ENCODE measurements at regions of chr12 and their contacts with region 1.

Region 1: GRCh38 chr12:6423267-6424007 is 21.3 kb upstream of the CD27 start:
- DNase-seq: peak; percentile 86
- ATAC-seq: peak; percentile 62
- H3K4me3 Mint-ChIP-seq: peak overlapping the region; percentile 39
- H3K27ac Mint-ChIP-seq: peak overlapping the region; percentile 87
- H3K4me1 Mint-ChIP-seq: peaks cover 47% of the 10 kb centered on the region
- H3K27me3 Mint-ChIP-seq: no peaks in the 10 kb centered on the region

Region 2: DNA sequence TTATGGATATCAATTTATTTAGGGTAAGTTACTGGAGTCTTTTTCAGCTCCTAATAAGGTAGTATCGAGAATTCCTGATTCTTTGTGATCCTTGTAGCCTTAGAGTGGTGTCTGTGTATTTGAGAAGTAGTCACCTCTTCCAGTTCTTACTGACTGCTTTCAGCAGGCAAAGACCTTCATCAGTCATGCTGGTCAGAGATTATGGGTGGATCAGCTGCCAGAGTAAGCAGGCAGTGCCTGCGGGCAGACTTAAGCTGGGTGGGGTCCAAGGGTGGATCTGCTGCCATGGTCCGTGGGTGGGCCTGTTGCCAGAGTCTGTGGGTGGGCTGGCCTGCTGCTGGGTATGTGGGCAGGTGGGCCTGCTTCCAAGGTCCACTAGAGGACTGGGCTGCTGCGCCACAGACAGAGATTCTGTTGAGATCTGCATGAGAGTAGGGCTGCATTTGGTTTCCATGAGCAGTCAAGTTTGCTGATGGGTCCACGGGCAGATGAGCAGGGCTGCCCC is 667.0 kb before region 1 on chr12:
- CTCF ChIA-PET with region 1: no interaction called
- POLR2A ChIA-PET with region 1: no interaction called
- intact Hi-C with region 1: no loop called
- DNase-seq: no peak
- ATAC-seq: no peak
- H3K4me3 Mint-ChIP-seq: no peak overlapping the region
- H3K27ac Mint-ChIP-seq: no peak overlapping the region
- H3K4me1 Mint-ChIP-seq: no peaks in the 10 kb centered on the region
- H3K27me3 Mint-ChIP-seq: peaks cover 5% of the 10 kb centered on the region

Region 3: GRCh38 chr12:6323340-6323994 is 100.0 kb before region 1 on chr12:
- CTCF ChIA-PET with region 1: interaction called, 6 read pairs
- POLR2A ChIA-PET with region 1: no interaction called
- intact Hi-C with region 1: loop called (anchors 5 kb)
- DNase-seq: peak; percentile 58
- ATAC-seq: peak; percentile 81
- H3K4me3 Mint-ChIP-seq: peak overlapping the region; percentile 24
- H3K27ac Mint-ChIP-seq: peak overlapping the region; percentile 89
- H3K4me1 Mint-ChIP-seq: peaks cover 32% of the 10 kb centered on the region
- H3K27me3 Mint-ChIP-seq: no peaks in the 10 kb centered on the region

Region 4: GRCh38 chr12:6451348-6452244 is 28.2 kb after region 1 on chr12 and contains the start of gene TAPBPL:
- CTCF ChIA-PET with region 1: interaction called, 30 read pairs
- POLR2A ChIA-PET with region 1: interaction called, 8 read pairs
- intact Hi-C with region 1: loop called (anchors 1 to 2 kb)
- DNase-seq: peak; percentile 91
- ATAC-seq: peak; percentile 84
- H3K4me3 Mint-ChIP-seq: peak within 1 kb of the TSS; percentile 100
- H3K27ac Mint-ChIP-seq: peak within 1 kb of the TSS; percentile 99
- H3K4me1 Mint-ChIP-seq: peaks cover 67% of the 10 kb centered on the region
- H3K27me3 Mint-ChIP-seq: no peaks in the 10 kb centered on the region
- total RNA-seq, gene TAPBPL: 27.4 to 40.8 TPM

Region 5: DNA sequence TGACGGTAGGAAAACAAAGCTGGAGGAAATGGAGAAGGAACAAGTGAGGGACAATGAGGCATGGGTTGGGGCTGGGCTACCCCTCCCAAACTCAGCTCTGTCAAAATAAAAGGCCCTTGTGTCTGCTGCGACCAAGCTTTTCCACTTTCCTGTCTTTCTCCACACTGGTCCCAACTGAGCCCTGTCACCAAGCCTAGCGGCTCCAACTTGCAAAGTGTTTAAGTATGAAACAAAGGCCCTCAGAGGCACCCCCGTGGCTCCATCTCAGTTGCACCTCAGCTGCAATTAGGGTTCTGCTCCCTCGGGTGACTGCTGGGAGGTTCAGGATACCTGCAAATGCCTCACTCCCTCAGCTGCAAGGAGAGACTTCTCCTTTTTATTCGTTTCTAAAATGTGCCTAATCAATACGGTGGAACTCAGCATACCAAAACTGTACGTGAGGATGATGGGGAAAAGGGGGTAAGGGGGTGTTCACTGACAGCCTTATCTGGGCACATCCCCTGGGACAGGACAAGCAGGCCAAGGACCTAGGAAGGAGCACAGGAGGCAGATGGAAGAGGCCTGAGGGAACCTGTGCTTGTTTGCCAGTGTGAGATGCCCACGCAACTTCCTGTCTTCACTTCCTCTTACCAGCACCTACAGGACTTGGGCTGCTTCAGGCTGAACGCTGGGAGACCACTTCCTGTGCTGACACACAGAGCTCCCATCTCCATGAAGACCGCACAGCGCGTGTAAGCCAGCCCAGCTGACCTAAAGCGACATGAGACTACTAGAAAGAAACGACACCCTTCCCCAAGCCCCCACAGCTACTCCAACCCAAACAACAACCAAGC is 38.2 kb after region 1 on chr12:
- CTCF ChIA-PET with region 1: interaction called, 200 read pairs
- POLR2A ChIA-PET with region 1: interaction called, 13 read pairs
- intact Hi-C with region 1: loop called (anchors 1 kb)
- DNase-seq: peak; percentile 92
- ATAC-seq: peak; percentile 81
- H3K4me3 Mint-ChIP-seq: peak overlapping the region; percentile 75
- H3K27ac Mint-ChIP-seq: peak overlapping the region; percentile 100
- H3K4me1 Mint-ChIP-seq: peaks cover 86% of the 10 kb centered on the region
- H3K27me3 Mint-ChIP-seq: no peaks in the 10 kb centered on the region

Region 6: DNA sequence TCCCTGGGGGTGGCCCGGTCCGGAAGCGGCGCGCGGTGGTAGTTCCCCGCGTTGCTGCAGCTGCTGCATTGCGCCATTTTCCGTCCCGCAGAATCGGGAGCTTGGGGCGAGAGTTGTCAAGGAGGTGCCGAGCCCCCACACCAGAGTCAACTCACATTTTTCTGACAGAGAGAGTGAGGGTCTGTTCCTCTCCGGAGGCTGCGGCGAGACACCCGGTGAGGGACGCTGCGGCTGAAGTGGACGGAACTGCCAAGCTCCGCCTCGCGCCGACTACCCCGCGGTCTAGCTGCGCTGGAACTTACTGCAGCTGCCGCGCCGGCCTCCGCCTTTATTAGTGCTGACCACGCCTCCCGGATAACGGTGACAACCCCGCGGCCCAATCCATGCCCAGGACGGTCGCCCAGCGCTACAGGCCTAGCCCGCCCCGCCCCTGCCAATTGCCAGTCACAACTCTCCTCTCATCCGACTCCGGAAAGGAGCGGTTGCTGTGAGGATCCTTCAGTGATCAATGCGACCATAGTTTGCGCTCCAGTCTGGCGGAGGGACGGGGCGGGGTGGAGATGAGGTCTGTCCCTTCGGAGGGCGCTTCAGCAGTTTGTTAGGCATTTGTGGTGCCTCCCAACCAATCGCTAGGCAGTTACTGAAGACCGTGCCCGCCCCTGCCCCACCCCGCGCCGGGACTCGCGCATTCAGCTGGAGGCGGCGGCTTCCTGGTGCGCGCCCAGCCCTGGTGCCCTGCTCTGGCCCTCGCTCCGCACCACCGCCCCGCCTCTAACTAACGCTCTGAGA is 47.1 kb after region 1 on chr12 and contains the start of gene VAMP1:
- CTCF ChIA-PET with region 1: interaction called, 200 read pairs
- POLR2A ChIA-PET with region 1: interaction called, 10 read pairs
- intact Hi-C with region 1: loop called (anchors 1 kb)
- DNase-seq: peak; percentile 99
- ATAC-seq: peak; percentile 91
- H3K4me3 Mint-ChIP-seq: peak within 1 kb of the TSS; percentile 91
- H3K27ac Mint-ChIP-seq: peak within 1 kb of the TSS; percentile 82
- H3K4me1 Mint-ChIP-seq: peaks cover 52% of the 10 kb centered on the region
- H3K27me3 Mint-ChIP-seq: no peaks in the 10 kb centered on the region
- total RNA-seq, gene VAMP1: 34.5 to 52.3 TPM

Region 7: DNA sequence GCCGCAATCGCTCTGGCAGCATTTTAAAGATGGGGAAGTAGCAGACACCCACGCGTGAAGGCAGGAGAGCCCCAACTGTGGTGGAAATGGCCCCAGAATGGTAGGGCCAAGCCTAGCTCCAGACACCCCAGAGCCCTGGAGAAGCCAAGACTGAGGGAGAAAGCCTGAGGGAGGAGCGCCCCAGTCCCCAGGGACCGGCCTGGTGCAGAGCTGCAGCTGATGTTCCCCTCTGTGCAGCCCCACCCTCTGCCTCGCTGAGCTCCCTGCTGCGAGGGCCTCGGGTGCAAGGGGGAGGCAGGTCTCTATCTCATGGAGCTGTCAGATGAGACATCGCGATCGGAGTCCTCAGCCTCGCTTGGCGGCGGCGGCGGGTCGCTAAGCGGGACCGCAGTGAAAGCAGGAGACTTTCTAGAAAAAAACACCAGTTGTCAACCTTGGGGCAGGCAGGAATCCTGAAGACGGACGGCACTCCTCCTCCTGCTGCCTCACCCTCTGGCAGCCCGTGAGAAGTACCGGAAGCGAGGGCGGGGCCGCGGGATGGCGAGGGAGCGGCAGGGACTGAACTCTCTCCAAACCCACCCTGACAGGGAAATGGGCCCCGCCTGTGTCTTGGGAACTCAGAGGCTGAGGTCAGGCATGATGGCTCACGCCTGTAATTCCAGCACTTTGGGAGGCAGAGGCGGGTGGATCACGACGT is 116.9 kb after region 1 on chr12:
- CTCF ChIA-PET with region 1: interaction called, 53 read pairs
- POLR2A ChIA-PET with region 1: interaction called, 3 read pairs
- intact Hi-C with region 1: loop called (anchors 1 kb)
- DNase-seq: peak; percentile 72
- ATAC-seq: peak; percentile 24
- H3K4me3 Mint-ChIP-seq: peak overlapping the region; percentile 45
- H3K27ac Mint-ChIP-seq: peak overlapping the region; percentile 73
- H3K4me1 Mint-ChIP-seq: peaks cover 53% of the 10 kb centered on the region
- H3K27me3 Mint-ChIP-seq: no peaks in the 10 kb centered on the region

Region 8: DNA sequence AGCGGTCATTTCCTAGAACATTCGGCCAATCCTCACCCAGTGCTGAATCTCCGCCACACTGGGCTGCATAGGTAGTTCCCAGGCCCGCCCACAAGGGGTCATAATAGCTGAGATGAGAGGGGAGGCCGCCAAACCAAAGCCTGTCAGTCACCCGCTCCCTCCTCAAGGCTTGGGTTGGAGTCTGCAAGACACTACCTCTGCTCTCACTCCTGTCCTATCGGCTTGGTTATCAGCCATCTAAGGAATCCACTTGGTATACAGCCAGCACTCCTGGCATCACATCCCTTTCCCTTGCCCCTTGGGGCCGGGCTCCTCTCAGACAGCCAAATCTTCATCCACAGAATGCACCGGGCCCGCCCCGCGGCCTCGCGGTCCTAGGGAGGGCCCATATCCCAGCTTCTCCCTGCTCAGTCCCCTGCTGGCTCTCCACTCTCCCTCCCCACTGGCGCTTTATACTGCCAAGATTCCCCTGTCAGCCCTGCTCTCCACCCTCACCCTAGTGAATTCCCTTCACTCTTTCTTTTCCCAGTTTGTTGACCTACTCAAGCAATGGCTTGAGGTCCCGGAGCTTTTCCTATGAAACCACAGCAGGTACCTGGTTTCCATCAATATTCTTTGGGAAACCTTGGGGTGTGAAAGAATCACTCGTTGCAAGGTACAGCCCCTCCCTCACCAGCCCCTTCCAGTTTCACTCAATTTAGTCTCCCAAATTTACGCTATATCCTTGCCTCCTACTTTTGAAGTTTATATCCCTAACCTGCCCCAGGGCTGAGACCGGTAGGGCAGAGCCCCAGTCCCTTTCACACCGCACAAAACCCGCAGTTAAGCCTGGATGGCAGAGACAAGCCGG is 131.0 kb after region 1 on chr12:
- CTCF ChIA-PET with region 1: interaction called, 4 read pairs
- POLR2A ChIA-PET with region 1: no interaction called
- intact Hi-C with region 1: loop called (anchors 1 kb)
- DNase-seq: peak; percentile 88
- ATAC-seq: peak; percentile 68
- H3K4me3 Mint-ChIP-seq: peak overlapping the region; percentile 91
- H3K27ac Mint-ChIP-seq: peak overlapping the region; percentile 76
- H3K4me1 Mint-ChIP-seq: peaks cover 54% of the 10 kb centered on the region
- H3K27me3 Mint-ChIP-seq: no peaks in the 10 kb centered on the region

Region 9: DNA sequence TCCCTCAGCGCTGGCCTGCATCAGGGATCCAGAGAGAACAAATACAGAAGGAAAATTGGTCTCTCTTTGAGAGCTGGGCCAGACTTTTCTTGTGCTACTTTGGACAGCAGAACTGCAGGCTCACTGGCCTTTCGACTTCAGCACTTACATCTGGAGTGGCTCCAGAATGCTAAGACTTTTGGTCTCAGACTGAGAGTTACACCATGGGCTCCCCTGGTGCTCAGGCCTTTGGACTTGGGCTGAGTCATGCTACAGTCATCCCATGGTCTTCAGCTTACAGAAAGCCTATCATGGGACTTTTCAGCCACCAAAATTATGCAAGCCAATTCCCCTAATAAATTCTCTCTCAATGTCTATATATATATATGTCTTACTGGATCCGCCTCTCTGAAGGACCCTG is 1089.1 kb after region 1 on chr12:
- CTCF ChIA-PET with region 1: no interaction called
- POLR2A ChIA-PET with region 1: no interaction called
- intact Hi-C with region 1: no loop called
- DNase-seq: peak; percentile 5
- ATAC-seq: no peak
- H3K4me3 Mint-ChIP-seq: no peak overlapping the region
- H3K27ac Mint-ChIP-seq: no peak overlapping the region
- H3K4me1 Mint-ChIP-seq: no peaks in the 10 kb centered on the region
- H3K27me3 Mint-ChIP-seq: peaks cover 14% of the 10 kb centered on the region

Measured in activated CD4-positive, alpha-beta T cell treated with anti-CD3 and anti-CD28 coated beads for 36 hours (primary cell).